Head of caudate nucleus (tissue), 42 donors: ENCODE measurements at regions of chr2 and their contacts with region 1.

Region 1: GRCh38 chr2:224894356-224894755 is 147.9 kb downstream of the DOCK10 start:
- DNase-seq: no peak

Region 2: DNA sequence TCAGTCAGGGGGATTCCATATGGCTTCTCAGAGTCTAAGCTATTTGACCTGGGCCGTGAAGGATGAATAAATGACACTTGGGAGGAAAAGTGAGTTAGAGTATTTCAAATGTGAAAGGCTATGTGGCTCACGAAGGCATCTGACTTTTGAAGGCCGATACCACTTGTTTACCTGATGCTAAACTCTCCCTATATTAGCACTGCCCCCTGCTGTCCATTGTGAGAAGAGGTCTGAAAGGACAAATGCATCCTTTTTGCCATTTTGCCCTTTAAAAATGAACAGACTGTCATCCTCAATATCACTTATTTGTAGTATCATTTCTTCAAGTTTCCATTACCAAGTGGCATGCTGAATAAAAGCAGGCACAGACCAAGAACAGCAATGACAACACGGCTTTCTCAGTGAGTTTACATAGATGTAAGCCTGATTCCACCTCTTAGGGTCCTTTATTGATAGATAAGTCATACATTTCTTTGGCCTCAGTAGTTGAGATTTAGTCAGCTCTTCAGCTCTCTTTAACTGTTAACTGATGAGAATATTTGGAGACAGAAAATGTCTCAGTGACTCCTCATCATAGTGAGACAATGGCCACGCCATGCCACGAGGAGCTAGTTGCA is 107.8 kb after region 1 on chr2:
- intact Hi-C with region 1: loop called (anchors 10 kb)
- DNase-seq: peak in 31 of 42 donors; percentile 32 to 87 (median 63)